CD4-positive, alpha-beta memory T cell (primary cell): ENCODE measurements at regions of chr19 and their contacts with region 1.

Region 1: GRCh38 chr19:45171211-45171623 is 6.8 kb downstream of the TRAPPC6A start:
- DNase-seq: peak; percentile 49 to 77 (median 54)
- H3K4me3 ChIP-seq: peak overlapping the region; percentile 17 to 43
- H3K4me3 Mint-ChIP-seq: peak overlapping the region; percentile 66 to 90 (median 84)
- H3K27ac ChIP-seq: peak overlapping the region; percentile 61
- H3K27ac Mint-ChIP-seq: peak overlapping the region; percentile 88 to 99 (median 94)
- H3K4me1 ChIP-seq: peaks cover 60% of the 10 kb centered on the region
- H3K4me1 Mint-ChIP-seq: peaks cover 27 to 65% (median 42%) of the 10 kb centered on the region in 4 donors
- H3K27me3 ChIP-seq: no peaks in the 10 kb centered on the region
- H3K27me3 Mint-ChIP-seq: no peaks in the 10 kb centered on the region

Region 2: GRCh38 chr19:45152504-45153338 is 18.5 kb before region 1 on chr19:
- CTCF ChIA-PET with region 1: interaction called, 3 read pairs
- POLR2A ChIA-PET with region 1: interaction called, 54 read pairs
- intact Hi-C with region 1: no loop called
- DNase-seq: peak; percentile 52 to 69 (median 64)
- H3K4me3 ChIP-seq: peak overlapping the region in 1 of 2 donors; percentile 60
- H3K4me3 Mint-ChIP-seq: peak overlapping the region; percentile 79 to 90 (median 82)
- H3K27ac ChIP-seq: no peak overlapping the region
- H3K27ac Mint-ChIP-seq: peak overlapping the region; percentile 73 to 83 (median 76)
- H3K4me1 ChIP-seq: peaks cover 28% of the 10 kb centered on the region
- H3K4me1 Mint-ChIP-seq: peaks cover 14 to 37% (median 25%) of the 10 kb centered on the region in 4 donors
- H3K27me3 ChIP-seq: peaks cover 3% of the 10 kb centered on the region
- H3K27me3 Mint-ChIP-seq: peaks cover 1 to 6% of the 10 kb centered on the region in 2 donors